SK-N-SH (cell line): ENCODE measurements at regions of chr17 and their contacts with region 1.

Region 1: DNA sequence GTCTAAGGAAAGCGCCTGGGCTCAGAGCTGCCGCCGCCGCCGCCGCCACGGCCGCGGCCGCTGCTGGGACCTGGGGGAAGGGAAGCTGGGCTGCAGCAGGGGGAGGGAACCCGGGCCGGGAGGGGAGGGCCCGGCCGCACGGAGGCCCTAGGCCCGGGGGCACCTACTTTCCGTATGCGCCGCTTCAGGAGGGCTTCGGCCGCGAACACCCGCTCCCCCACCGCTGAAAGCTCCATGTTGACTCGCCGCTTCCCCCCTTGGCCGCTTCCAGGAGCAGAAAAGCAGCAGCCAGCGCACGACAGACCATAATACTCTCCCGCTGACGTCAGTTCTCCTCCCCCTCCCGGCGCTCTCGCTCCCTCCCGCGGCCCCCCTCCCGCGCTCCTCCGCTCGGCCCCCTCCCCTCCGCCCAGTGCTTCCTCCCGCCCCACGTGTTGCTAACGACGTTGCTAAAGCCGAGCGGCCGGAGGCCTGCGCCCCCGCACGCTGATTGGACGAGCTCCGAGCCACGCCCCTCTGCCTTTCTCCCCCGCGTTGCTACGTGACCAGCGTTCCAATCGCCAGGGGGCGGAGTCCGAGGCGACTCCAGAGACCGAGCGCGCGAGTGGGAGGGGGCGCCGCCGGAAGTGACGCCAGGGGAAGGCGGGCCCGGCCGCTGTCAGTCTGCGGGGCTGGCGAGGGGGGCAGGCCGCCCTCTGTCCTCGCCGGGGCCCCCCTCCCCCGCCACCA is at the start of gene CBX8:
- DNase-seq: peak; percentile 100
- H3K4me3 ChIP-seq: peak within 1 kb of the TSS; percentile 79 to 85
- H3K27ac ChIP-seq: peak within 1 kb of the TSS; percentile 82 to 98; a peak in 3 of 4 replicates
- H3K4me1 ChIP-seq: peaks cover 23 to 43% of the 10 kb centered on the region in 2 experiments; a peak in 3 of 4 replicates
- H3K27me3 ChIP-seq: 0 out of 2 replicates have a peak, but pooled peaks cover 3% of the 10 kb centered on the region
- CTCF ChIP-seq: no peak
- EP300 ChIP-seq: peak; percentile 36 to 63; a peak in 2 of 4 replicates
- RAD21 ChIP-seq: no peak; the same call in 1 of the 2 replicates
- polyA plus RNA-seq, gene CBX8: 2.1 and 2.9 TPM in 2 replicates

Region 2: GRCh38 chr17:79721993-79722671 is 74.8 kb before region 1 on chr17:
- CTCF ChIA-PET with region 1: no interaction called
- POLR2A ChIA-PET with region 1: no interaction called
- DNase-seq: peak; percentile 79
- H3K4me3 ChIP-seq: no peak overlapping the region
- H3K27ac ChIP-seq: no peak overlapping the region
- H3K4me1 ChIP-seq: peaks cover 0 to 3% of the 10 kb centered on the region in 2 experiments; a peak in 1 of 4 replicates
- H3K27me3 ChIP-seq: 0 out of 2 replicates have a peak, but pooled peaks cover 9% of the 10 kb centered on the region
- CTCF ChIP-seq: peak; percentile 49
- EP300 ChIP-seq: no peak
- RAD21 ChIP-seq: peak; percentile 79

Region 3: GRCh38 chr17:79749156-79749815 is 47.6 kb before region 1 on chr17:
- CTCF ChIA-PET with region 1: interaction called, 29 read pairs
- POLR2A ChIA-PET with region 1: interaction called, 3 read pairs
- DNase-seq: no peak
- H3K4me3 ChIP-seq: no peak overlapping the region
- H3K27ac ChIP-seq: no peak overlapping the region
- H3K4me1 ChIP-seq: peaks cover 0 to 6% of the 10 kb centered on the region in 2 experiments; a peak in 1 of 4 replicates
- H3K27me3 ChIP-seq: peaks cover 22% of the 10 kb centered on the region
- CTCF ChIP-seq: no peak
- EP300 ChIP-seq: no peak
- RAD21 ChIP-seq: no peak

Region 4: DNA sequence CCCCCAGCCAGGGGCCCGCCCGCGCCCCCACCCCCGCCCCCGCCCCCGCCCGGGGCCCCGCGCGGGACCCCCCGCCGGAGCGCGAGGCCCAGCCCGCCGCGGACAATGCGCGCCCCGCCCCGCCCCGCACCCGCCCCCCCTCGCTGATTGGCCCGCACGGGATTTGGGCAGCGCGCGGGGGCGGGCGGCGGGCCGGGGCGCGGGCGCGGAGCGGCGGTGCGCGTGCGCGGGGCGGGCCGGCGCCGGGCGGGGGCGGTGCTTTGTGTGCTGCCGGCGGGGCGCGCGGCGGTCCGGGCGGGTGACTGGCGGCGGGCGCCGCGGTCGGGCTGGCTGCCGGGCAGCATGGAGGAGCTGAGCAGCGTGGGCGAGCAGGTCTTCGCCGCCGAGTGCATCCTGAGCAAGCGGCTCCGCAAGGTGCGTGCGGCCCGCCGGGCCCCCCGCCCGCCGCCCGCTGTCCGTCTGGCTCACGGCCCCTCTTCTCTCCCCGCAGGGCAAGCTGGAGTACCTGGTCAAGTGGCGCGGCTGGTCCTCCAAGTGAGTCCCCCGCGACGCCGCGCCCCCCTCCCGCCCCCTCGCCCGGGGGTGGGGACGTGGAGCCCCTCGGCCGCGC is 18.9 kb before region 1 on chr17 and contains the start of gene CBX2:
- CTCF ChIA-PET with region 1: interaction called, 9 read pairs
- POLR2A ChIA-PET with region 1: interaction called, 10 read pairs
- DNase-seq: peak; percentile 100
- H3K4me3 ChIP-seq: peak within 1 kb of the TSS; percentile 84 to 93
- H3K27ac ChIP-seq: peak within 1 kb of the TSS; percentile 7 to 83; a peak in 2 of 4 replicates
- H3K4me1 ChIP-seq: peaks cover 0 to 20% of the 10 kb centered on the region in 2 experiments; a peak in 3 of 4 replicates
- H3K27me3 ChIP-seq: peaks cover 23% of the 10 kb centered on the region
- CTCF ChIP-seq: peak; percentile 27; the same call in 1 of the 2 replicates
- EP300 ChIP-seq: no peak
- RAD21 ChIP-seq: no peak
- polyA plus RNA-seq, gene CBX2: 19.7 and 22.4 TPM in 2 replicates

Region 5: GRCh38 chr17:79785900-79786810 is 10.8 kb before region 1 on chr17:
- CTCF ChIA-PET with region 1: interaction called, 6 read pairs
- POLR2A ChIA-PET with region 1: interaction called, 10 read pairs
- DNase-seq: no peak
- H3K4me3 ChIP-seq: no peak overlapping the region
- H3K27ac ChIP-seq: peak overlapping the region in 1 of 2 experiments; percentile 47; a peak in 1 of 4 replicates
- H3K4me1 ChIP-seq: peaks cover 0 to 32% of the 10 kb centered on the region in 2 experiments; a peak in 2 of 4 replicates
- H3K27me3 ChIP-seq: no peaks in the 10 kb centered on the region
- CTCF ChIP-seq: no peak
- EP300 ChIP-seq: no peak
- RAD21 ChIP-seq: no peak

Region 6: DNA sequence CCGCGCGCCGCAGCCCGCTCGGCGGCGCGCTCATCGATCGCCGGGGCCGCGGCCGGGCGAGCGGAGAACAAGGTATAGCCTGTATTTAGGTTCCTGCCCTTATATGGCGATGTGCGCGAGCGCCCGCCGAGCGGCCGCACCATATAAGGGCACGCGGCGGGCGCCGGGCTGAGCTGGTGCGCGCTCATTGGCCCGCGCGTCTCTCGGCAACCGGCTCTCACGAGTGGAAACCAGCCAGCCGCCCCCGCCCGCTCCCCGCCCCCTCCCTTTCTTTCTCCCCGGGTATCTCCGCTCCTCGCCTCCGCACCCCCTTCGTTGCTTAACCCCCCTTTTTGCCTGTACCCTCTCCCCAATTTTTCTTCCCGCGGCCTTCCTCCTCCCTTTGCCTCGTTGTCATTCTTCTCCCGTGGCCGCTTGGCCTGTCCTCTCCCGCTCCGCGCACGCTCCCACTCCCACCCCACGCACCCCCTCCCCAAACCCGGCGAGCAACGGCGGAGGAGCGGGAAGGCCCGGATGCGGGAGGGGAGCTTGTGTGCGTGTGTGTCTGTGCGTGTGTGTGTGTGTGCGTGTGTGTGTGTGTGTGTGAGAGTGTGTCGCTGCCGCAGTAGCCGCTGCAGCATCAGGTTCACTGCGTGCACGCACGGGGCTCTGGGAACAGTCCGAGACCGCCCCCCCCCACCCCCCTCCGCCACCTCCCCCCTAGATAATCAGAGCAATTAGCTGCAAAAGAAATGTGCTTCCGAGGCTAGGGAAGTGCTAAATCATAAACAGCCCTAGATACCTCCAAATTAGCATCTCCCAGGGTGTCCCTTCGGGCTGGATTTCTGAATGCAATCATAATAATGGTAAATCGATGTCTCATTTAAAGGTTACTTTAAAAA is 13.4 kb after region 1 on chr17:
- CTCF ChIA-PET with region 1: interaction called, 146 read pairs
- POLR2A ChIA-PET with region 1: interaction called, 50 read pairs
- DNase-seq: peak; percentile 97
- H3K4me3 ChIP-seq: peak overlapping the region; percentile 51 to 64
- H3K27ac ChIP-seq: peak overlapping the region in 1 of 2 experiments; percentile 90; a peak in 2 of 4 replicates
- H3K4me1 ChIP-seq: peaks cover 15 to 41% of the 10 kb centered on the region in 2 experiments
- H3K27me3 ChIP-seq: peaks cover 43% of the 10 kb centered on the region
- CTCF ChIP-seq: no peak
- EP300 ChIP-seq: no peak; a peak in 1 of 4 replicates
- RAD21 ChIP-seq: no peak

Region 7: DNA sequence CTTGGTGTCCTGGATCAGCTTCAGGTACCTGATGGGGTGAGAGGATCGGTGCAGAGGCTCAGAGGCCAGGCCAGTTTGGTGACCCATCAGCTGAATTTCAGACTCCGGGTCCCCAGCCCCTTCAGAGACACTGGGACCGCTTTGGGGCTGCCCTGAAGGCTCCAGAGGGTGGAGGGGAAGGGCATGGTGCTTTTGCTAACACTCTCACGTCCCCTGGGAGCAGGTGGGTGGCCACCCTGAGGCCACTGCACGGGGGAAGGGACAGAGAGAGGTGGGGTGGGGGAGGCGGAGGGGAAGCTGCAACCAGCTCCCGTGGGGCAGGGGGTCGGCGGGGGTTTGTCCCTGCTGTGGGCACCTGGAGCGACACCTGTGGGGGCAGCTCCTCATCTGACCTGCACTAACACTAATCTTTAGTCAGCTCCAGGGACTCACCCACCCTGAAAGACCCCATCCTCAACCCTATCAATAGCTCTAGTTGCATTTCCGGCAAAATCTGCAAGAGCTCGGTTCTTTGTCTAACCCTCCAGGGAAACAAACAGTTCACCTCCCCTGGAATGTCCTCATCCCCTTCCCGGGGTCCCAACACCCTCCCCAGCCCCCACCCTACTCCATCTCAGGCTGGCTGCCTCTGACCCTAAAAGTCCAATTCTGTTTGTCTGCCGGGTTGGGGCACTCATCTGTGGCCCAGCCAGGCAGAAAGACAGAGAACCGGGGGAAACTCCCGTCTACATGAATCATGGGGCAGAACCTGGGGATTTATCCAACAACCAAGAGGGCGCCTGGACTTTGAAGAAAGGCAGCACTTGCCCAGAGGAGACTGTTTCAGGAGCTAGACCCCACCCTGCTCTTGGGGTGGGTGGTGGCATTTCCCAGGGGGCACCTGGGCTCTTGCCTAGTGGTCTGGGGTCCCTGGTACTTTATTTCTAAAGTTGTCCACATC is 134.2 kb after region 1 on chr17:
- CTCF ChIA-PET with region 1: no interaction called
- POLR2A ChIA-PET with region 1: no interaction called
- DNase-seq: no peak
- H3K4me3 ChIP-seq: peak overlapping the region; percentile 60 to 70; a peak in 2 of 4 replicates
- H3K27ac ChIP-seq: no peak overlapping the region
- H3K4me1 ChIP-seq: peaks cover 6 to 24% of the 10 kb centered on the region in 2 experiments; a peak in 2 of 4 replicates
- H3K27me3 ChIP-seq: no peaks in the 10 kb centered on the region
- CTCF ChIP-seq: no peak
- EP300 ChIP-seq: no peak
- RAD21 ChIP-seq: no peak